AG04449 (cell line): ENCODE measurements at regions of chr2 and their contacts with region 1.

Region 1: GRCh38 chr2:218301176-218301819 is 9.0 kb upstream of the TMBIM1 start:
- DNase-seq: no peak
- H3K4me3 ChIP-seq: no peak overlapping the region
- CTCF ChIP-seq: peak; percentile 88

Region 2: GRCh38 chr2:218276986-218277755 is 24.1 kb before region 1 on chr2:
- CTCF ChIA-PET with region 1: interaction called, 118 read pairs
- POLR2A ChIA-PET with region 1: no interaction called
- DNase-seq: no peak
- H3K4me3 ChIP-seq: no peak overlapping the region
- CTCF ChIP-seq: no peak

Region 3: DNA sequence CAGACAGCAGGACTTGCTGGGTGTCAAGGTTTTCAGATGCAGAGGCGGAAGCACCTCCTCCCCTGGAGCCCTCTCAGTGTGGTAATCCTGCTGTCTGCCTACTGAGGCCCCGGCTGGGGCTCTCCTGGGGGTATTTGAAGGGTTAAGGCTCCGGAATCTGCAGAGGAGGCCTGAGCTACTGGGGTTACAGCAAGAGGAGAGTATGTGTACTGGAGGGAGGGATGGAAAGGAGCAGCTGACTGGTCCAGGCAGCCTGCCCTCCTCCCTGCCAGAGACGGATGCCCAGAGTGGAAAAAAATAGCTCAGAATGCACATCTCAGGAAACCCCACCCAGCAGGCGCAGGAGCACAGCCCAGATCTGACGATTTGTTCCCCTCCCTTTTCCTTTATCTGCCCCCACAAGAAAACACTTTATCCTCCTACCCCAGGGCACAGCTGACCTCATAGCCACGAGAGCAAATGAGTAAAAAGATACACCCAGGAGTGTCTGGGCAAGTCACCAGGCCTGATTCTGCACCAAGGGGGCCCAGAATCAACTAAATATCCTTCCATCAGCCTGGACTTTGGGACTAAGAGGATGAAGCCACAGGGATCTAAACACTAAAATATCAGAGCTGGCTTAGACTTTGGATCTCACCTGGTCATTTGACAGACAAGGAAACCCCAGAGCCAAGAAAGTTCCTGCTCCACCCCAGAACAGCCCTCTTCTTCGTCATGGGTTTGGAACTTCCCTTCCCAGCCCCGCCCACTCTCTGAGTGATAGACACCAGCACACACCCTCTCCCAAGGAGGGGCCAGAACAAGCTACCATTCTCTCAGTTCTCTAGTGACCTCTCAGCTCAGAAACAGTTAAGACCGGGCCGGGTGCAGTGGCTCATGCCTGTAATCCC is 14.5 kb before region 1 on chr2:
- CTCF ChIA-PET with region 1: interaction called, 92 read pairs
- POLR2A ChIA-PET with region 1: interaction called, 4 read pairs
- DNase-seq: peak; percentile 90
- H3K4me3 ChIP-seq: peak overlapping the region; percentile 56
- CTCF ChIP-seq: no peak

Region 4: GRCh38 chr2:218312267-218312756 is 11.0 kb after region 1 on chr2:
- CTCF ChIA-PET with region 1: interaction called, 92 read pairs
- POLR2A ChIA-PET with region 1: no interaction called
- DNase-seq: no peak
- H3K4me3 ChIP-seq: no peak overlapping the region
- CTCF ChIP-seq: no peak

Region 5: DNA sequence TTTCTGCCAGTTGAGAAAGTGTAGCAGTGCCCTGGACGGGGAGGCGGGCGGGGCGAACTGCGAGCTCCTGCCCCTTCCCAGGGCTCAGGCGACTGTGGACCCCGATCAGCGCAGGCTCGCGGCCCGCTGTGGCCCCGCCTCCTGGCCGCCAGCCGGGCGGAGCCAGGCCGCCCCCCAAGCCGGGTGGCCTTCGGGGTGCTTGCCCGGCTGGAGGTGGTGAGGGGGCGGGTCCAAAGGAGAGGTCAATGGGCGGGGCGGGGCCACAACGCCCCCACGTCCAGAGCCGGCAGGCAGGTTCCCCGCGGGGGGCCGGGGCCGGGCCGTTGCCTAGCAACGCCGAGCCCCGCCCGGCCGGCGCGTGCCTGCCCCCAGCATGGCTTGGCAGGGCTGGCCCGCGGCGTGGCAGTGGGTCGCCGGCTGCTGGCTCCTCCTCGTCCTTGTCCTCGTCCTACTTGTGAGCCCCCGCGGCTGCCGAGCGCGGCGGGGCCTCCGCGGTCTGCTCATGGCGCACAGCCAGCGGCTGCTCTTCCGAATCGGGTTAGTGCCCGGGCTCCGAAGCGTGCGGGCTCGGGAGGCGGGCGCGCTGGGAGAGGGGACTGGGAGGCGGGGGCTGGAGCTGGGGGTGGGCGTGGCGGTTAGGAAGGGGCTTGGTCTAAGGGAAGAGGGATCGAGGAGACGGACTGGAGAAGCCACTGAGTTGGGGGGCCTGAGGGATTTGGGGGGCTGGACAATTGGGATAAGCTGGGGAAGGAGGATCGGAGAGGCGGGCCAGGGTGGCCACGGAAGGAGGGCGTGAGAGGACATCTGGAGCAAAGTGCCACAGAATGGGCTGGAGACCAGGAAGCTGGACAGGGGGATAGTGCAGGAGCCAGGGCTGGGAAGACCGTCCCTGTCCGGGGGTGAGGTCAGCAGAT is 21.9 kb after region 1 on chr2:
- CTCF ChIA-PET with region 1: interaction called, 39 read pairs
- POLR2A ChIA-PET with region 1: no interaction called
- DNase-seq: no peak
- H3K4me3 ChIP-seq: peak overlapping the region; percentile 65
- CTCF ChIP-seq: no peak